Calu3 (cell line): ENCODE measurements at regions of chr5 and their contacts with region 1.

Region 1: DNA sequence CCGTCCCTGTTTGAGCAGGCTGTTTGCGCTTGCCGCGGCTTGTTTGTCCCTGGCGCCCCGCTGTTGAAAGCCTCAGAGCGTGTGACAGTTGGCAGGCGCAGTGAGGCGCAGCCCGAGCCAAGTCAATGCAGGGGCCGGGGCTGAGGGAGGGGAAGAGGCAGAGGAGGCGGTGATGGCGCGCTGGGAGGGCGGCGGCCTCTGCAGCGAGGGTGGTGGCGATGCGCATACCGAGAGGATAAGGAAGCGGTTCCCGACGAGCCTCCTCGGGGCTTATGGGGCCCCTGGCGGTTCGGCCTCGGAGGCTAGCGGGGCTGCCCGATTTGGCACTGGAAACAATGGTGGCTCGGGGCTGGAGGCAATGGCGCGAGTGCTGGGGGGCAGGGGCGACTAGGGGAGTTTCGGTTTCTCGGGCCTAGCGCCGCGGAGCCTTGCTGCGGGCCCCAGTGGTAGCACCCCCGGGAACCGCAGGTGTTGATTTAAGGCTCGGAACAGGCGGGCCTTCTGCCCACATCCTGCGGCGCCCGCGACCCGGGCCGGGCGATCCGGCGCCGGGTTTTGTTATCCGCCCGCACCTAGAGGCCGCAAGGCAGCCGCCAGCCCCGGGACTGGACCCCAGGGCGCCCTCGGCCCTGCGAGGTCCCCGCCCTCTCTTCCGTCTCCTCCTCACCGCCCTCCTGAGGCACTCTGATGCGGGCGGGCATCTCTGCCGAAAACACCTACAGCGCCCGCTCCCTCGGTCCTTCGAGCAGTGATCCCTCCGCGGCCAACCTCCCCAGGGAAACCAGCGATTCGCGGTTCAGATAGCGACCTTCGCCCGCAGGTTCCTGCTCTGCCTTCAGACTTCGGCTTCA is 947 bp upstream of the LNPEP start:
- DNase-seq: peak; percentile 98
- H3K4me3 Mint-ChIP-seq: peak overlapping the region; percentile 78
- H3K27ac Mint-ChIP-seq: peak overlapping the region; percentile 93
- H3K4me1 Mint-ChIP-seq: peaks cover 42% of the 10 kb centered on the region
- H3K27me3 Mint-ChIP-seq: no peaks in the 10 kb centered on the region
- CTCF ChIP-seq: no peak

Region 2: GRCh38 chr5:96876292-96876850 is 58.6 kb before region 1 on chr5 and contains the start of gene ERAP2:
- CTCF ChIA-PET with region 1: no interaction called
- intact Hi-C with region 1: loop called (anchors 1 kb)
- DNase-seq: peak; percentile 22
- H3K4me3 Mint-ChIP-seq: peak within 1 kb of the TSS; percentile 67
- H3K27ac Mint-ChIP-seq: peak within 1 kb of the TSS; percentile 76
- H3K4me1 Mint-ChIP-seq: peaks cover 44% of the 10 kb centered on the region
- H3K27me3 Mint-ChIP-seq: no peaks in the 10 kb centered on the region
- CTCF ChIP-seq: no peak
- total RNA-seq, gene ERAP2: 67.7 TPM in 2 replicates

Region 3: DNA sequence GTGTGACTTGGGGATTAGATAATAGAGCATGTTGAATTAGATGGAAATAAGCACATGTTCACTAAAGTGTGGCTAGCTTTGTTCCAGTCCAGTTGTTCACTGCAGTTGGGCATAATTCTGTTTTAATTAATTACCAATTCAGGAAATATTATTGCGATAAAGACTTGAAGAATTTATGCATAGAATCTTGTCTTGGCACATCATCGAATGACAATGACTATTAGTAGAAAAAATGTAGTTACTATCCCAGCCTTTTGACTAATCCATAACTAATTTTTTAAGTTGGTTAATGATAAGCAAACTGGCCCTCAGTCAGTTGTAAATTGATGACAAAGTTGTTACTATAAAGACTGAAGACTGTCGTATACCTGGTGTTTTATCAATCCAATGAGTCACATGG is 11.4 kb after region 1 on chr5:
- CTCF ChIA-PET with region 1: interaction called, 10 read pairs
- intact Hi-C with region 1: loop called (anchors 1 kb)
- DNase-seq: no peak
- H3K4me3 Mint-ChIP-seq: no peak overlapping the region
- H3K27ac Mint-ChIP-seq: peak overlapping the region; percentile 3
- H3K4me1 Mint-ChIP-seq: peaks cover 28% of the 10 kb centered on the region
- H3K27me3 Mint-ChIP-seq: no peaks in the 10 kb centered on the region
- CTCF ChIP-seq: no peak

Region 4: GRCh38 chr5:97037819-97038218 is 102.9 kb after region 1 on chr5:
- CTCF ChIA-PET with region 1: no interaction called
- intact Hi-C with region 1: no loop called
- DNase-seq: no peak
- H3K4me3 Mint-ChIP-seq: no peak overlapping the region
- H3K27ac Mint-ChIP-seq: no peak overlapping the region
- H3K4me1 Mint-ChIP-seq: peaks cover 2% of the 10 kb centered on the region
- H3K27me3 Mint-ChIP-seq: no peaks in the 10 kb centered on the region
- CTCF ChIP-seq: no peak

Region 5: DNA sequence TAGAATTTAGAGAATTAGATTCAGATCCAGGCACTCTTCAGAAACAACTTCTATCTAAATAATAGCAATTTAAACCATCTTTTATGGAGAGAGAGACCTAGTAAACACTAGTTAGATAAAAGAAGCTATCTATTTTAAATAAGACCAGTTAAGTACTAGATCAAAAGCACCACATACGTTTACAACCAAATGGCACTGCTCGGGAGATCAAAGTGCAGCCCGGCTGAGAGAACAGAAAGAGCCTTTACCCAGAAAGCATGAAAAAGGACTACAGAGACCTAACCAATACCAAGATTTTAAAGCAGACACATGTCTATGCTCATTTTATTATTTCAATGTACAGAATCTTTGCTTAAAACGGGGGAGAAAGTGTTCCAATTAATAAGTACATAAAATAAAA is 176.7 kb after region 1 on chr5:
- CTCF ChIA-PET with region 1: no interaction called
- intact Hi-C with region 1: no loop called
- DNase-seq: no peak
- H3K4me3 Mint-ChIP-seq: no peak overlapping the region
- H3K27ac Mint-ChIP-seq: no peak overlapping the region
- H3K4me1 Mint-ChIP-seq: no peaks in the 10 kb centered on the region
- H3K27me3 Mint-ChIP-seq: no peaks in the 10 kb centered on the region
- CTCF ChIP-seq: no peak